Activated naive CD4-positive, alpha-beta T cell treated with anti-CD3 and anti-CD28 coated beads, Interleukin-2, amount 10 ng/mL, durations not matched to agents 7 days and 5 days (primary cell): ENCODE measurements at regions of chr5 and their contacts with region 1.

Region 1: GRCh38 chr5:113336975-113337374 is 97.8 kb downstream of the TSSK1B start:
- DNase-seq: peak; percentile 38
- H3K4me3 Mint-ChIP-seq: no peak overlapping the region
- H3K27ac Mint-ChIP-seq: no peak overlapping the region
- H3K4me1 Mint-ChIP-seq: peaks cover 22% of the 10 kb centered on the region
- H3K27me3 Mint-ChIP-seq: peaks cover 41% of the 10 kb centered on the region

Region 2: GRCh38 chr5:113311301-113311700 is 25.7 kb before region 1 on chr5:
- CTCF ChIA-PET with region 1: no interaction called
- DNase-seq: no peak
- H3K4me3 Mint-ChIP-seq: no peak overlapping the region
- H3K27ac Mint-ChIP-seq: no peak overlapping the region
- H3K4me1 Mint-ChIP-seq: no peaks in the 10 kb centered on the region
- H3K27me3 Mint-ChIP-seq: peaks cover 20% of the 10 kb centered on the region

Region 3: GRCh38 chr5:113513384-113514288 is 176.7 kb after region 1 on chr5 and contains the start of gene YTHDC2:
- CTCF ChIA-PET with region 1: interaction called, 149 read pairs
- DNase-seq: peak; percentile 91
- H3K4me3 Mint-ChIP-seq: peak within 1 kb of the TSS; percentile 86
- H3K27ac Mint-ChIP-seq: peak within 1 kb of the TSS; percentile 84
- H3K4me1 Mint-ChIP-seq: peaks cover 32% of the 10 kb centered on the region
- H3K27me3 Mint-ChIP-seq: peaks cover 19% of the 10 kb centered on the region

Region 4: GRCh38 chr5:113606298-113607134 is 269.5 kb after region 1 on chr5:
- CTCF ChIA-PET with region 1: interaction called, 124 read pairs
- DNase-seq: peak; percentile 60
- H3K4me3 Mint-ChIP-seq: no peak overlapping the region
- H3K27ac Mint-ChIP-seq: no peak overlapping the region
- H3K4me1 Mint-ChIP-seq: peaks cover 15% of the 10 kb centered on the region
- H3K27me3 Mint-ChIP-seq: peaks cover 30% of the 10 kb centered on the region